ENCODE measurements at regions of chr10 and their contacts with region 1.

Region 1: DNA sequence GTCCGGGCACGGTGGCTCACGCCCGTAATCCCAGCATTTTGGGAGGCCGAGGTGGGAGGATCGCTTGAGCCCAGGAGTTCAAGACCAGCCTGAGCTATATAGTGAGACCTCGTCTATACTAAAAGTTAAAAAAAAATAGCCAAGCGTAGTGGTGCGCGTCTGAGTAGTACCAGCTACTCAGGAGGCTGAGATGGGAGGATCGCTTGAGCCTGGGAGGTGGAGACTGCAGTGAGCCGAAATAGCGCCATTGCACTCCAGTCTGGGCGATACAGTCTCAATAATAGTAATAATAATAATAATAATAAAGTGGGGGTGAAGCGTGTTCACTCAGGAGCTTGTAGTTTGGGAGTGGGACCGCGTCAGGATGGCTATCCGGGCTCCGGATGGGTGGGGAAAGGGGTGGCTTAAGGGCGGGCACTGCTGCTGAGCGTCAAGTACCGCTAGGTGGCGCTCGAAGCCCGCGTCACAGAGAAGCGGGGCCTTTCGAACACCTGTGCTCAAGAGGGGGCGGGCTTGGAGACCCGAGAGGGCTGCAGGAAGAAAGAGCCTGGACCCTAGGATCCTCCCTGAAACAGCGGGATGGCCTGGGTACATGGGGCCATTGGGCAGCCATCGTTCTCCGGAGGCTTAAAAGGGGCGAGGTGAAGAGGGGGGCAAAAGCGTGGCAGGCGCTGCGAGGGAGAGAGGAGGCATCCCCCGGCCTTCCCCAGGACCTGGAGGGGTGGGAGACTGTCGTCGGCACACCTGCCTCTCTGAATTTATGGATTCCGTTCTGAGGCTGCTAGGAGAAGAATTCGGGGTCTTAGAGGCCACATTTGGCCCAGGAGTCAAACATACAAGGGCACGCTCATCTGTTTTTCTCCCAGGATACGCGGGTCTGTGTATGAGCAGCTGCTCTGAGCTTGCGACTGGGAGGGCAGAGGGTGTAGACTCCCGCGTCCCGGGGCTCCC is 14.5 kb downstream of the LBX1 start:
- DNase-seq: peak; percentile 89
- ATAC-seq: peak; percentile 84
- H3K4me3 Mint-ChIP-seq: peak overlapping the region; percentile 68
- H3K27ac Mint-ChIP-seq: no peak overlapping the region
- H3K4me1 Mint-ChIP-seq: peaks cover 28% of the 10 kb centered on the region
- H3K27me3 Mint-ChIP-seq: peaks cover 69% of the 10 kb centered on the region

Region 2: GRCh38 chr10:101141616-101142532 is 72.8 kb before region 1 on chr10:
- CTCF ChIA-PET with region 1: interaction called, 15 read pairs
- POLR2A ChIA-PET with region 1: no interaction called
- intact Hi-C with region 1: no loop called
- DNase-seq: peak; percentile 91
- ATAC-seq: peak; percentile 90
- H3K4me3 Mint-ChIP-seq: no peak overlapping the region
- H3K27ac Mint-ChIP-seq: no peak overlapping the region
- H3K4me1 Mint-ChIP-seq: peaks cover 19% of the 10 kb centered on the region
- H3K27me3 Mint-ChIP-seq: peaks cover 78% of the 10 kb centered on the region

Region 3: GRCh38 chr10:101238732-101239105 is 24.0 kb after region 1 on chr10:
- CTCF ChIA-PET with region 1: interaction called, 47 read pairs
- POLR2A ChIA-PET with region 1: no interaction called
- intact Hi-C with region 1: loop called (anchors 1 to 2 kb)
- DNase-seq: peak; percentile 63
- ATAC-seq: peak; percentile 81
- H3K4me3 Mint-ChIP-seq: no peak overlapping the region
- H3K27ac Mint-ChIP-seq: no peak overlapping the region
- H3K4me1 Mint-ChIP-seq: peaks cover 21% of the 10 kb centered on the region
- H3K27me3 Mint-ChIP-seq: peaks cover 57% of the 10 kb centered on the region

Region 4: DNA sequence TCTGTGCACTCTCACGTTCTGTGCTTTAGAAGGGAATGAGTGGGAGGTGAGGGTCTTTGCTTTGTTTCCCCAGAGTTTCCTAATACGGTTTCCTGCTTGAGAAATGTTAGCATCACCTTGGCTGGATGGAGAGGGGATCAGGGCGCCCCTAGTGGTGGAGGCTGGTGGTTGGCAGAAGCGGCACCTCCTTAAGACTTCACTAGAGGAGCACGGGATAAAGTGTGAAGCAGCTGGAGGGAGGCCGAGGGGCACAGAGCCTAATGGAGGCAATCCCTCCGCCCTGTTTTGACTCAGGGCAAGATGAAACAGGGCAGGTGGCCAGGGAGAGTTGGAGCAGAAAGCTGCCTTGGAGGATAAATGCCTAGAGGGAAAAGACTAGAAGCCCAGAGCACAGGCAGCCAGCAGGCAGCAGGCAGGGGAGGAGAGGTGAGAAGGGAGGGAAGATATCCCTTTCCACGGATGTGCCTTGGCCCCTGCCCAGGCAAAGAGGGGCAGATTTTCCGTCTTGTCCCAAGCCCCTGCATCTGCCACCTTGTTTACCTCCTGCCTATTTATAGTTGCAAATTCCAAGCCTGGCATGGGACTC is 83.3 kb after region 1 on chr10:
- CTCF ChIA-PET with region 1: interaction called, 69 read pairs
- POLR2A ChIA-PET with region 1: no interaction called
- intact Hi-C with region 1: no loop called
- DNase-seq: peak; percentile 89
- ATAC-seq: peak; percentile 90
- H3K4me3 Mint-ChIP-seq: no peak overlapping the region
- H3K27ac Mint-ChIP-seq: no peak overlapping the region
- H3K4me1 Mint-ChIP-seq: peaks cover 2% of the 10 kb centered on the region
- H3K27me3 Mint-ChIP-seq: peaks cover 41% of the 10 kb centered on the region

Region 5: DNA sequence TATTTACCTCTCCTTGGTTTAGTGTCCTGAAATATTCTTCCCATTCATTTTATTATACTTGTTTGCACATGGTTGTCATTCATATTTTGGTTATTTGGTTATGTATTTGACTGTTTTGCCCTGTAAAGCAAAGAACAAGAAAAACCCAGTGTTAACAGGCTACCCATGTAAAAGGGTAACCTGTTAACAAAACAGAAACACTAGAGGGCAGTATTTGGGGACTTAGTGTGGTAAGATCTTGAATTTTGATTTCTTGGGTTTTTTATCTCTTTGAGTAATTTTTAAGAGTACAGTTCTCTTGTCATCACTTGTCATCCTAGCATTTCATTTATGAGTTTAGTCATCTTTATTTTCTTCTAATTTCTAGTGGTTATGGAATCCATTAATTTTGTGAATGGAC is 322.1 kb after region 1 on chr10:
- CTCF ChIA-PET with region 1: interaction called, 4 read pairs
- POLR2A ChIA-PET with region 1: no interaction called
- intact Hi-C with region 1: loop called in 1 of 2 experiments (anchors 1 kb)
- DNase-seq: no peak
- ATAC-seq: peak; percentile 23
- H3K4me3 Mint-ChIP-seq: no peak overlapping the region
- H3K27ac Mint-ChIP-seq: no peak overlapping the region
- H3K4me1 Mint-ChIP-seq: no peaks in the 10 kb centered on the region
- H3K27me3 Mint-ChIP-seq: no peaks in the 10 kb centered on the region

Measured in activated CD4-positive, alpha-beta T cell treated with anti-CD3 and anti-CD28 coated beads for 36 hours (primary cell).